Activated T-helper 2 cell treated with anti-CD3 and anti-CD28 coated beads, Interferon-gamma antibody, Interleukin-2, Interleukin-4, amounts not matched to agents 10 μg/mL and 5 μg/mL and 100 μg/mL, durations not matched to agents 14 hours and 24 hours and 36 hours (primary cell): ENCODE measurements at regions of chr15 and their contacts with region 1.

Region 1: GRCh38 chr15:90581771-90582352 is 52.1 kb downstream of the CRTC3 start:
- DNase-seq: no peak
- H3K4me3 Mint-ChIP-seq: peak overlapping the region; percentile 27
- H3K27ac Mint-ChIP-seq: peak overlapping the region; percentile 58
- H3K4me1 Mint-ChIP-seq: peaks cover 53% of the 10 kb centered on the region
- H3K27me3 Mint-ChIP-seq: no peaks in the 10 kb centered on the region

Region 2: DNA sequence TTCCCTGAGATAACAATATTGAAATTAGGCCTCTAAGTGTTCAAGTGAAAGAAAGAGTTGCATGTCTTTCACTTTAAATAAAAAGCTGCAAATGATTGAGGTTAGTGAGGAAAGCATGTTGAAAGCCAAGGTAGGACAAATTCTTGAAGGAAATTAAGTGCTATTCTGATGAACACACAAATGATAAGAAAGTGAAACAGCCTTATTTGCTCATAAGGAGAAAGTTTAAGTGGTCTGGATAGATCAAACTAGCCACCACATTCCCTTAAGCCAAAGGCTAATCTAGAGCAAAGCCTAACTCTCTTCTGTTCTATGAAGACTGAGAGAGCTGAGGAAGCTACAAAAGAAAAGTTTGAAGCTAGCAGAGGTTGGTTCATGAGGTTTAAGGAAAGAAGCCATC is 16.0 kb before region 1 on chr15:
- intact Hi-C with region 1: loop called (anchors 1 kb)
- DNase-seq: no peak
- H3K4me3 Mint-ChIP-seq: peak overlapping the region; percentile 59
- H3K27ac Mint-ChIP-seq: peak overlapping the region; percentile 96
- H3K4me1 Mint-ChIP-seq: peaks cover 78% of the 10 kb centered on the region
- H3K27me3 Mint-ChIP-seq: no peaks in the 10 kb centered on the region